AG04449 (cell line): ENCODE measurements at regions of chr5 and their contacts with region 1.

Region 1: GRCh38 chr5:9774472-9775079 is 144.4 kb upstream of the TAS2R1 start:
- DNase-seq: no peak
- H3K4me3 ChIP-seq: no peak overlapping the region
- CTCF ChIP-seq: peak; percentile 32

Region 2: DNA sequence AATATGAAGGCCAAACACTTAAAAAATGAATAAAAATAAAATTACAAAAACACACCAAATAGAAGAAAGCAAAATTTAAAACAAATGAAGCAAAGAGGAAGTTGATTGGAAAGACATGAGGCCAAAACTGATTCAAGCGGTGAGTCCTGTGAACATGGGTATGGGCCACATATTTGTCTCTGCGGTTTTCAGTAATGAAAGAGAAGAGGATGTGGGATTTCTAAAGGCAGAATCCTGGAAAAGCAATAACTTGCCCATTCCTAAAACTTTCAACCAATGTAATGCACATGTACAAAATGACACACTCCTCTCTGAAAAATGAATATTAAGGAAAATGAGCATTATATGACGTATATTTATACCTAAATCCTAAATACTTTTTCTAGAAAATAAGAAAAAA is 492.4 kb before region 1 on chr5:
- CTCF ChIA-PET with region 1: no interaction called
- POLR2A ChIA-PET with region 1: no interaction called
- DNase-seq: no peak
- H3K4me3 ChIP-seq: no peak overlapping the region
- CTCF ChIP-seq: no peak

Region 3: GRCh38 chr5:9834871-9835770 is 60.5 kb after region 1 on chr5:
- CTCF ChIA-PET with region 1: no interaction called
- POLR2A ChIA-PET with region 1: no interaction called
- DNase-seq: no peak
- H3K4me3 ChIP-seq: no peak overlapping the region
- CTCF ChIP-seq: no peak

Region 4: DNA sequence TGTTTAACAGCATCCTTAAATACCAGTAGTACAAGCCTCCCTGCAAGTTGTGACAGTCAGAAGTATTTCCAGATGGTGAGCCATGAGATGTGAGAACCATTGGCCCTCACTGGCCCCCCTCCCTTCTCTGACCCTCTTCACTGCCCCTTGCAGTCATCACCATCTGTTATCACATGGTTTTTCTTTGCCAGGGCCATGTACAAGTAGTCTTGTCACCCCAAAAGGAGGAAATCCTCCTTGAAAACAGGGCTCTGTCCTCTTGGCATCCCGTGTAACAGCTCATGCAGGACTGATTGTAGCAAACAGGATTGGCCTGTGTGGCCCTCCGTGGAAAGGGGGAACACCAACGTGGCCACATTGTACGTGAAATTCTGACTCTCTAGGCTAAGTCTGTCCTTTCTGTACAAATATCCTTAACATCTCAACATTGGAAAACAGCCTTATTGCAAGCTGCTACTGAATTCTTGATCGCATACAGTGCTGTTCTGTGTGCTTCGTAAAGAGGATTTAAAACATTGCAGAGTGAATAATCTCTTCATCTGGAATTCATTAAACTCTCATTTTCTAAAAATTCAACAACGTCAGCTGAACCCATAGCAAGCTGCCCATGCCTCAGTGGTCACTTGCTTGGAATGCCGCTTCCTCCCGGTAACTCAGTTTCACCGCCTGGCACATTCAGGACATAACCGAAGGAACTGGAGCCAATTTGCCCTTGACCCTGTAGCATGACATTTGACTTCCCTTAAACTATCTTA is 303.4 kb after region 1 on chr5:
- CTCF ChIA-PET with region 1: no interaction called
- POLR2A ChIA-PET with region 1: no interaction called
- DNase-seq: peak; percentile 87
- H3K4me3 ChIP-seq: peak overlapping the region; percentile 12
- CTCF ChIP-seq: no peak

Region 5: GRCh38 chr5:10111571-10111970 is 337.0 kb after region 1 on chr5:
- CTCF ChIA-PET with region 1: interaction called, 15 read pairs
- POLR2A ChIA-PET with region 1: no interaction called
- DNase-seq: no peak
- H3K4me3 ChIP-seq: no peak overlapping the region
- CTCF ChIP-seq: peak; percentile 66

Region 6: DNA sequence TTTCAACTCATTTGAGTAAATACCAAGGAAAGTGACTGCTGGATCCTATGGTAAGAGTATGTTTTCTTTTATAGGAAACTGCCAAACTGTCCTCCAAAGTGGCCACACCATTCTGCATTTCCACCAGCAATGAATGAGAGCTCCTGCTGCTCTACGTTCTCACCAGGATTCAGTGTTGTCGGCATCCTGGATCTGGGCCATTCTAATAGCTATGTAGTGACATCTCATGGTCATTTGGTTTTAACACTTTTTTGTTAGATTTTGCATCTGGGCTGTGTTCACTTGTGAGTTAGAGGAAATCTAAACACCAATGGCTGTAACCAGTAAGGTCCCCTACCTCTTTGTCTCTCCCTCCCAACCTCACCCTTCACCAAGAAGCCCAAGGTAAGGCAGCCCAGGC is 359.3 kb after region 1 on chr5:
- CTCF ChIA-PET with region 1: interaction called, 15 read pairs
- POLR2A ChIA-PET with region 1: no interaction called
- DNase-seq: no peak
- H3K4me3 ChIP-seq: no peak overlapping the region
- CTCF ChIP-seq: no peak